Activated naive CD4-positive, alpha-beta T cell treated with anti-CD3 and anti-CD28 coated beads, Interleukin-2, amount 10 ng/mL, durations not matched to agents 7 days and 5 days (primary cell): ENCODE measurements at regions of chr3 and their contacts with region 1.

Region 1: DNA sequence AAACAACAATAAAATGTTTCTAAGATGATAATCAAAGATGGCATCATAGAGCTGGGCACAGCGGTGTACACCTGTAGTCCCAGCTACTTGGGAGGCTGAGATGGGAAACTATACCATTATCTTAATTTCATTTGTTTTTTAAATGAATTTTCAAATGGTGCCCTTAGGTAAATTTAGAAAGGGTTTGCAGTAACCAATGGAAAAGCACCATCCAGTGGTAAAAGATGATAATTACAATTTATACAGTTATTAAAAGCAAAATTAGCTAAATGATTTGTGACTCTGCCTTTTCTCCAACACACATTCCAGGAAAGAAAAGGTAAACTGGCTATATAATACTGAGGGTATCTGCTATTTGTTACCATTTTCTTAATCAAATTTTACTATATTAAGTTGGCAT is 14.4 kb upstream of the ANKRD28 start:
- DNase-seq: no peak
- H3K4me3 Mint-ChIP-seq: no peak overlapping the region
- H3K27ac Mint-ChIP-seq: no peak overlapping the region
- H3K4me1 Mint-ChIP-seq: peaks cover 16% of the 10 kb centered on the region
- H3K27me3 Mint-ChIP-seq: no peaks in the 10 kb centered on the region

Region 2: DNA sequence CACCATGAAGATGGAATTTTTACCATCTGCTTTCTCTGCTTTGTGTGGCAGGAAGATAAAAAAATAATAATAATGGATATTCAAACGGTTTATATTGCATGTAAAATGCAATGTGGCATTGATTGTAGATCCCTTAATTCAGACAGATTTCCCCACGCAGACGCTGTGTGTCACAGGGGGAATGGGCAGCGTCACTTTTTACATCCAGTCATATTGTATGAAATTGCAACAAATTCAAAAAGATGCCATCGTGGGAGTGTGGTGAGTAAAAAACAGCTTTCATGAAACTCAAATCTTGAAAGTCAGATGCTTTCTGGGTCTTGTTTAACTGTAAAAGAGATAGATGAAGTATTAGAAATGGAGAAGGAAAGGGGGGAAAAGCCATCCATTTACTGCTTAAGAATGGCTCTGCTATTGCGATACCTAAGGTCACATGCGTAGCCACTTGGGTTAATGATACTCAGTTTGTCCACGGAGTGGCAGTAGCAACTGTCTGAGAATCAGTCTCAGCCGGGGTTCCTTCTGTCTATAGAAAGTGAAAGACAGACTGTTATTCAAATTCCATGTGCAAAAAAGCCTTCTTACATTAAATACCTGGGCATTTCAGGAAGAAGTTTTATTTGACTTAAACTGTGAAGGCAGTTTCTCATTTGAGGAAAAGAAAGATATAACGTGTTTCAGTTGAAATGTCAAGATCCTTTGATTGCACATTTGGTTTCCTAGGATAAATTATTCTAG is 182.2 kb before region 1 on chr3:
- CTCF ChIA-PET with region 1: interaction called, 58 read pairs
- DNase-seq: peak; percentile 78
- H3K4me3 Mint-ChIP-seq: no peak overlapping the region
- H3K27ac Mint-ChIP-seq: no peak overlapping the region
- H3K4me1 Mint-ChIP-seq: peaks cover 18% of the 10 kb centered on the region
- H3K27me3 Mint-ChIP-seq: peaks cover 4% of the 10 kb centered on the region

Region 3: GRCh38 chr3:15636003-15636709 is 176.0 kb before region 1 on chr3:
- CTCF ChIA-PET with region 1: interaction called, 58 read pairs
- DNase-seq: peak; percentile 38
- H3K4me3 Mint-ChIP-seq: no peak overlapping the region
- H3K27ac Mint-ChIP-seq: no peak overlapping the region
- H3K4me1 Mint-ChIP-seq: peaks cover 25% of the 10 kb centered on the region
- H3K27me3 Mint-ChIP-seq: peaks cover 4% of the 10 kb centered on the region

Region 4: GRCh38 chr3:15797642-15798303 is 14.4 kb before region 1 on chr3 and contains the start of gene ANKRD28:
- CTCF ChIA-PET with region 1: interaction called, 16 read pairs
- DNase-seq: no peak
- H3K4me3 Mint-ChIP-seq: peak within 1 kb of the TSS; percentile 57
- H3K27ac Mint-ChIP-seq: peak within 1 kb of the TSS; percentile 86
- H3K4me1 Mint-ChIP-seq: peaks cover 74% of the 10 kb centered on the region
- H3K27me3 Mint-ChIP-seq: no peaks in the 10 kb centered on the region

Region 5: GRCh38 chr3:16264708-16265454 is 452.7 kb after region 1 on chr3 and contains the starts of genes DPH3 and OXNAD1:
- CTCF ChIA-PET with region 1: no interaction called
- DNase-seq: peak; percentile 99
- H3K4me3 Mint-ChIP-seq: peak within 1 kb of the TSS; percentile 97
- H3K27ac Mint-ChIP-seq: peak within 1 kb of the TSS; percentile 96
- H3K4me1 Mint-ChIP-seq: peaks cover 39% of the 10 kb centered on the region
- H3K27me3 Mint-ChIP-seq: no peaks in the 10 kb centered on the region